Posterior cingulate gyrus (tissue), 11 donors: ENCODE measurements at regions of chr4 and their contacts with region 1.

Region 1: DNA sequence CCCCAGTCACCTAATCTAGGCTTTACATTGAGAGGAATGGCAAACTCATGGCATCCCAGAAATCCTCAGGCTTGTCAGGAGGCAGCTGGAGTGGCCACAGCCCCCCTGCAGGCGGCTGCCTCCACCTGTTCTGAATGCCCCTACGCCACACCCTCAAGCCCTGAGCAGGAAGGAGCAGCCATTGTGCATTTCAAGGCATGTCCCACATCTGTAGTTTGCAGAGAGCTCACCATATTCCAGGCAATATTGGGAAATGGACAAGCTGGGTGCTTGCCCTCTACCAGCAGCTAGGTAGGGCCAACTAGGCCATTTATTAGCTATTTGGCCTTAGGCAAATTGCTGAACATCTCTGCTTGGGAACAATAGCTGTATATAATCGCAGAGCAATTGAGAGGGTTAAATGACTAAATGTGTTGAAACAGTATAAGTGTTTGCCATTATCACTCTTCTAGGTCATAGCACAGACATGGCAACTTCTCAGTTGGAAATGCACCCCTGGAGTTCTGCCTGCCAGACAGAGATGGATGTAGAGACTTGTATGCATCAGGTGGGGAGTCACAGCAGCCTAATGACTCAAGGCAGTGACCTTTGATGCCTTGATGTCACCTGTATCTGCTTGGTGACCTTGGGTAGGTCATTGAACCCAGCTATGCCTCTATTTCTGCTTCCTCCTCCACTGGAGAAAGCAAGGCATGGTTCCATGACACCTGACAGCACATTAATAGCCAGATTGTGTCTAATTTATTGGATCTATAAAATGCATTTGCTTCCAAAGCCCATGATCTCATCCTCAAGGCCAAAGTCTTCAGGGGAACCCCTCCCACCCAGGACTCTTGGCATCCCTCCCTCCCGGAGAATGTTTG is 52.8 kb downstream of the FHDC1 start:
- DNase-seq: no peak

Region 2: DNA sequence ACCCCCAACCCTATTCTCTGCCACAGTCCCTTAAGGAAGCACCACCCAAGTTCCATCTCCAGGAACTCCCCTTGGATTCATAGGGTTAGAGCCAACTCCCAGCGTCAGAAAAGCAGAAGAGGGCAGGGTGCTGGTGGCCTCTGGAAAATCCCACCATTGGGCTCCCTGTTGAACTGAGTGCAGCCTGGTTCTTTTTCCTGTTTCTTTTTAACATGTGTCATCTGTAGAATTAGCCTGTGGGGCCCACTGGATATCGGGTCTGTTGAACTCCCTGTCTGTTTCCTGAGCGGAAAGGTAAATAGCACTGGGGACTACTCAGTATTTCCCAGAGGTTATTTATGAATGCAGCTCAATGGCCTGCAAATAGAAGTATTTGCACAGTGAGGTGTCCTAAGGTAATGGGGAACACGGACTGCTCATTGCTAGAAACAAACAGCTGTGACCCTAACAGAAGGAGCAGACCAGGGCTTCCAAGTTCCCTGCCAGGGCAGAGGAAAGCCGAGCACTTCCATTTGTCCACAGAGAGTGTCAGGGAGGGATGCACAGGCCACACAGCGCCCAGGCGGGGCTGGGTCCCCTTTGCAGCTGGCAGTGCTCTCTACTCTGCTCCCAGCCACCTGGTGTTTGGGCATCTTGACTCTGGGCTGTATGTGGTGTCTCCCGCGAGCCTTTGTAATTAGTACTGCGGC is 49.8 kb after region 1 on chr4:
- intact Hi-C with region 1: loop called (anchors 2 kb)
- DNase-seq: no peak